Motor neuron (in vitro differentiated cells): ENCODE measurements at regions of chr4 and their contacts with region 1.

Region 1: DNA sequence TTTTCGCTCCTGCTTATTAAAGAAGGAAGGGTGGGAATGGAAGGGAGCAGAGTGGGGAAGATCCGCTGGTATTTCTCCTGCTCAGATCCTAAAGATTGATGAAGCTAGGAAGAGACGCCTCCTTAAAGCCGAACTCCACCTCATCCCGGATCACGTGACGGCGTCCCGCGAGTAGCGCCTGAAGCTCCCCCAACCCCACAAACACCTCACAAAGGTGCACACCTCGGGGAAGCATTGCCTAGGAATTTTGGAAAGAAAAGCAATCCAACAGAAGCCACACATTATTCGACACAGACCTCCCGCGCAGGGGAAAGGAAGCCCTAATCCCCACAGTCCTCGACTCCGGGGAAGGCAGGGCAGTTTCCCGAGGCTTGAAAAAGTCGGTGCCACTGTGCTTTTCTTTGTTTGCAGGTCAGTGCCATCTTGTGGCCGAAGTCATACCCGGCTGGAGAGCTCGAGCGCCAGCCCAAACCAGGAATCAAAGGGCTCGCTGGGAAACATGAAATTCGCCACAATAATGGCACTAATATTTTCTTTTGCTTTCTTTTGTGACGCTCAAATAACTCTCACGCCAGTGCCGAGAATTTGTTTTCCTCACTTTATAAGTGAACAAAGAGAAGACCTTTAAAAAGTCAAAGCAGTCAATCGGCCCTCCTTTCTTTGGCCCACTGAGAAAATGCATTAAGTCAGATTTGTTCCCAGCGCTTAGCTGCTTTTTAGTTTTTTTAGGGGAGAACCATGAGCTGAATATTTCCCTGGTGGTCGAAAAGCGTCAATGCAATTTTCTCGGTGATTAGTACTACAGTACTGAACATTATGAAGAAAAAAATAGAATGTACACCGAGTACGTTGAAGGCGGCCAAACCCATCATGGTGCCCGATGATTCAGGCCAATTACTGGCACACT is at the start of gene NPY1R:
- ATAC-seq: peak; percentile 83 to 96 (median 88)
- H3K4me3 ChIP-seq: peak within 1 kb of the TSS; percentile 50 to 75 (median 69)
- H3K27ac ChIP-seq: no peak within 1 kb of the TSS
- H3K4me1 ChIP-seq: peaks cover 3 to 7% of the 10 kb centered on the region in 2 donors
- total RNA-seq, gene NPY1R: 0.25 to 3.2 (median 1.7) TPM in 7 of 8 experiments, not detected in the other

Region 2: DNA sequence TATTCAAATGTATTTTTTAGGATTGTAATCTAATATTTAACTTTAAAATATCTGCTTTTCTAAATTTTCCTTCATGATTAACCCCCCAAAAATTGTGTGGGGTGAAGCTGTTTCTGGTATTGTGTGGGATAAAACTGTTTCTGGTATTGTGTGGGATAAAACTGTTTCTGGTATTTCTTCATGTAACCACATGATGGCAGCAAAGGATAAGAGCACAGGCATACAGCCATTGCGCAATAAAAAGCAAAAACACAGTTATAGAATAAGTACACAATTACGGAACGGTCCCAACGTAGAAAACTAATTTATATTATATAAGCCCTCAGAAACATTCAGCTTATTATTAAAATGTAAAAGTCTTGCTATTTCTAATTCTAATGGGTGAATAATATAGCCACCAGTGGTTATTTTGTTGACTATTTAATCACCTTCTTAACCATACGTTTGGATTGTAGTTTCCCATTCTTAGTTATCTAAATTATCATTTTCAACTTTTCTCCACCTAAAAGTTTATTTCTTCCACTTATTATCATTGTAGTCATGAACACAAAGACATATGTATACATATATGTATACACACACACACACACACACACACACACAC is 835.1 kb before region 1 on chr4:
- in situ Hi-C with region 1: loop called in 2 of 9 experiments (anchors 25 kb)
- ATAC-seq: peak in 7 of 8 experiments; percentile 50 to 70 (median 53)
- H3K4me3 ChIP-seq: no peak overlapping the region
- H3K27ac ChIP-seq: no peak overlapping the region
- H3K4me1 ChIP-seq: no peaks in the 10 kb centered on the region

Region 3: GRCh38 chr4:162661913-162662312 is 670.8 kb before region 1 on chr4:
- in situ Hi-C with region 1: no loop called
- ATAC-seq: no peak
- H3K4me3 ChIP-seq: no peak overlapping the region
- H3K27ac ChIP-seq: no peak overlapping the region
- H3K4me1 ChIP-seq: no peaks in the 10 kb centered on the region

Region 4: GRCh38 chr4:163107754-163108153 is 225.0 kb before region 1 on chr4:
- in situ Hi-C with region 1: loop called in 3 of 9 experiments (anchors 25 kb)
- ATAC-seq: peak in 2 of 8 experiments; percentile 20 to 32
- H3K4me3 ChIP-seq: no peak overlapping the region
- H3K27ac ChIP-seq: no peak overlapping the region
- H3K4me1 ChIP-seq: no peaks in the 10 kb centered on the region

Region 5: DNA sequence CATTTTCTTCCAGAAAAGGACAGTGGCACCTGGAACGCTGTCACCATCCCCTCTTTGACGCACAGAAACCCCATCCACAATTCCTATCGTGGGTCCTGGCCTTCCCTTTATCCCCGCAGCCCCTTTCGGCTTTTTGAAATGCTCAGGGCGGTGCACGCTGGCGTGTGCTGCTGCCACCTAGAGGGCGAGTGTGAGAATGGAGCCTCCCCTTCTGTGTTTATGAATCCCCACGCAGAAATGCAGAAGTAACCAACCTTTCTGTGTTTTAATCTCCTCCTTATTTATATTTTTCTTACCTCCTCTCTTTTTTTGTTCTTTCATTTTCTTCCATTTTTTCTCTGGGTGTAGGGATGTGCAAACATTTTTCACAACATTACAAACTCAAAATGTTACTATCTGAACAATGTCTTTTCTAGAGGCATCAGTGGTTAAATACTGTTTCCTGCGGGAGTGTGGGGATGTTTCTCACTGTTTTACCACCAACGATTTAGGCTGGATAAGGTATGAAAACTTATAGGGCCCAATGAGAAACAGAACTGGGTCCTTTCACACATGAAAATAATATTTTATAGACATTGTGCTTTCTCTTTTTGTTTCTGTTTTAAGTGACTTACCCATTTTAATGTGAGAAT is 211.8 kb after region 1 on chr4:
- in situ Hi-C with region 1: no loop called
- ATAC-seq: peak; percentile 37 to 85 (median 69)
- H3K4me3 ChIP-seq: no peak overlapping the region
- H3K27ac ChIP-seq: no peak overlapping the region
- H3K4me1 ChIP-seq: no peaks in the 10 kb centered on the region

Region 6: GRCh38 chr4:163744861-163745260 is 412.1 kb after region 1 on chr4:
- in situ Hi-C with region 1: no loop called
- ATAC-seq: no peak
- H3K4me3 ChIP-seq: no peak overlapping the region
- H3K27ac ChIP-seq: no peak overlapping the region
- H3K4me1 ChIP-seq: no peaks in the 10 kb centered on the region